GM12878 (cell line): ENCODE measurements at regions of chr7 and their contacts with region 1.

Region 1: DNA sequence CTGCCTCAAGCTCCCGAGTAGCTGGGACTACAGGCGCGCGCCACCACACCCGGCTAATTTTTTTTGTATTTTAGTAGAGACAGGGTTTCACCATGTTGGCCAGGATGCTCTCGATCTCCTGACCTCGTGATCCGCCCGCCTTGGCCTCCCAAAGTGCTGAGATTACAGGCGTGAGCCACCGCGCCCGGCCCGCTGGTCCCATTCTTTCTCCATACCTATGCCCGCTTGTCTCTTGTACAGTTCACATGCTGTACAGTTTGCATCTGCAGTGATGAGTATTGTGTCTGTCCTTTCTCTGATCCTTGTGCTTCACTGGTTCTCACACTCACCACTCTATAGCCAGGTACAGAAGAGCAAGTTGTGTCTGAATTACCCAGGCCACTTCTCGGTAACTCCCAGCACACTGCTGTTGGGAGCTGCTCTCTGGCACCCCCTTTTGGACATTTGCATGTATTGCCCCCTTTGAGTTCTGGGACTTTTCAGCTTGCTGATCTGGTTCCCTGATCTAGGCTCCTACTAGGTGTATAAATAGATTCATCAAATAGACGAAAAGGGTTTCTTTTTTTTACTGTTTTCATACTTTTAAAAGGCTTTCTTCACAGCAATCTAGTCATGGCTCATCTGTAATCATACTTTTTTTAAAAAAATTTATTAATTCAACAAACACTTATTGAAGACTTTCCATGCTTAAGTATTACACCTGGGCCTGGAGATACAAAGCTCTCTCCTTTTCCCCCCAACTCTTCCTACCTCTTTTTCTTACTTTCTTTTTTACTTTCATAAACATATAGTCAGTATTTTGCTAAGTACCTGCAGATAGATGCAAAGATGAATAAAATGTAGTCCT is 53.5 kb downstream of the AOAH start:
- DNase-seq: peak; percentile 28
- ATAC-seq: peak; percentile 95
- H3K4me3 ChIP-seq: no peak overlapping the region
- H3K27ac ChIP-seq: no peak overlapping the region
- H3K4me1 ChIP-seq: no peaks in the 10 kb centered on the region
- H3K27me3 ChIP-seq: peaks cover 0 to 6% of the 10 kb centered on the region in 2 experiments; a peak in 1 of 4 replicates
- CTCF ChIP-seq: peak; percentile 83 to 88 (median 86)
- EP300 ChIP-seq: no peak
- POLR2A ChIP-seq: no peak
- RAD21 ChIP-seq: peak; percentile 81

Region 2: GRCh38 chr7:36440880-36441279 is 229.9 kb before region 1 on chr7:
- CTCF ChIA-PET with region 1: interaction called, 11 read pairs
- POLR2A ChIA-PET with region 1: no interaction called
- RAD21 ChIA-PET with region 1: interaction called, 10 read pairs
- SMC1A ChIA-PET with region 1: interaction called, 6 read pairs
- in situ Hi-C with region 1: no loop called
- intact Hi-C with region 1: no loop called
- DNase-seq: no peak
- ATAC-seq: no peak
- H3K4me3 ChIP-seq: no peak overlapping the region
- H3K27ac ChIP-seq: no peak overlapping the region
- H3K4me1 ChIP-seq: no peaks in the 10 kb centered on the region
- H3K27me3 ChIP-seq: no peaks in the 10 kb centered on the region
- CTCF ChIP-seq: peak; percentile 15 to 32 (median 23); a peak in 3 of 6 replicates
- EP300 ChIP-seq: no peak
- POLR2A ChIP-seq: no peak
- RAD21 ChIP-seq: peak; percentile 30; the same call in 1 of the 2 replicates

Region 3: GRCh38 chr7:36487756-36488336 is 183.0 kb before region 1 on chr7:
- CTCF ChIA-PET with region 1: interaction called, 36 read pairs
- POLR2A ChIA-PET with region 1: interaction called, 3 read pairs
- RAD21 ChIA-PET with region 1: interaction called, 9 read pairs
- SMC1A ChIA-PET with region 1: interaction called, 21 read pairs
- in situ Hi-C with region 1: no loop called
- intact Hi-C with region 1: loop called (anchors 2 kb)
- DNase-seq: peak; percentile 21
- ATAC-seq: peak; percentile 57; the same call in 2 of the 3 replicates
- H3K4me3 ChIP-seq: no peak overlapping the region
- H3K27ac ChIP-seq: no peak overlapping the region
- H3K4me1 ChIP-seq: no peaks in the 10 kb centered on the region
- H3K27me3 ChIP-seq: no peaks in the 10 kb centered on the region; a peak in 1 of 4 replicates
- CTCF ChIP-seq: peak; percentile 57 to 77 (median 65); a peak in 5 of 6 replicates
- EP300 ChIP-seq: no peak
- POLR2A ChIP-seq: no peak
- RAD21 ChIP-seq: peak; percentile 84

Region 4: DNA sequence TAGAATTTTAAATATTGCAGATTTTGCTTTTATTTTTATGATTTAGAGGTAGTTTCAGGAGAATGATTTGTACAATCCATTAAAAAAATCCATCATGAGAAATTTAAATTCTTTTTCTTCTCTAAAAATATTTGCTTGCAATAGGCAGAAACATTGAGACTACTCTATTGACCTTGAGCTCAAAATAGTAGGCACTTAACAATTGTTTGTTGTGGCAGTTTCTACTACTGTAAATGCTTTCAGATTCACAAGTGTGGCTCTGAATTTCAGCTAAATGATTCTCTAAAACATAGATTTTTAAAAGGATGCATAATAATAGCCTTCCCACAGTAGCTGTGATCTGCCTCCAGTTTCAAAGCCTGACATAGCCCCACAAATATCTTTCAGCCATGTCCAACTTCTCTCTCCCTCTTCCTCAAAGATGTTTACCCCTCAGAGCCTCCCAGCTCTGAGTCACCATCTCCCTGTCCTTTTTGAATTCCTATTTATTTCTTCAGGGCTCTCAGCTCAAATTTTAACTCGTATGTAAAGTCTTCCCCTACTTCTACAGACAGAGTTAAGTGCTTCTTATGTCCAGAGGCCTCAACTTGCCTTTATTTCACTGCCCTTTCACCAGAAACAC is 107.0 kb before region 1 on chr7:
- CTCF ChIA-PET with region 1: no interaction called
- POLR2A ChIA-PET with region 1: no interaction called
- RAD21 ChIA-PET with region 1: no interaction called
- SMC1A ChIA-PET with region 1: no interaction called
- in situ Hi-C with region 1: no loop called
- intact Hi-C with region 1: no loop called
- DNase-seq: no peak
- ATAC-seq: no peak
- H3K4me3 ChIP-seq: no peak overlapping the region
- H3K27ac ChIP-seq: no peak overlapping the region
- H3K4me1 ChIP-seq: no peaks in the 10 kb centered on the region
- H3K27me3 ChIP-seq: no peaks in the 10 kb centered on the region; a peak in 1 of 4 replicates
- CTCF ChIP-seq: no peak
- EP300 ChIP-seq: no peak
- POLR2A ChIP-seq: no peak
- RAD21 ChIP-seq: no peak

Region 5: GRCh38 chr7:36630112-36630650 is 40.6 kb before region 1 on chr7:
- CTCF ChIA-PET with region 1: no interaction called
- POLR2A ChIA-PET with region 1: no interaction called
- RAD21 ChIA-PET with region 1: no interaction called
- SMC1A ChIA-PET with region 1: no interaction called
- in situ Hi-C with region 1: no loop called
- intact Hi-C with region 1: no loop called
- DNase-seq: no peak
- ATAC-seq: no peak
- H3K4me3 ChIP-seq: no peak overlapping the region
- H3K27ac ChIP-seq: no peak overlapping the region
- H3K4me1 ChIP-seq: no peaks in the 10 kb centered on the region
- H3K27me3 ChIP-seq: peaks cover 0 to 3% of the 10 kb centered on the region in 2 experiments; a peak in 1 of 4 replicates
- CTCF ChIP-seq: no peak
- EP300 ChIP-seq: no peak
- POLR2A ChIP-seq: no peak
- RAD21 ChIP-seq: no peak

Region 6: DNA sequence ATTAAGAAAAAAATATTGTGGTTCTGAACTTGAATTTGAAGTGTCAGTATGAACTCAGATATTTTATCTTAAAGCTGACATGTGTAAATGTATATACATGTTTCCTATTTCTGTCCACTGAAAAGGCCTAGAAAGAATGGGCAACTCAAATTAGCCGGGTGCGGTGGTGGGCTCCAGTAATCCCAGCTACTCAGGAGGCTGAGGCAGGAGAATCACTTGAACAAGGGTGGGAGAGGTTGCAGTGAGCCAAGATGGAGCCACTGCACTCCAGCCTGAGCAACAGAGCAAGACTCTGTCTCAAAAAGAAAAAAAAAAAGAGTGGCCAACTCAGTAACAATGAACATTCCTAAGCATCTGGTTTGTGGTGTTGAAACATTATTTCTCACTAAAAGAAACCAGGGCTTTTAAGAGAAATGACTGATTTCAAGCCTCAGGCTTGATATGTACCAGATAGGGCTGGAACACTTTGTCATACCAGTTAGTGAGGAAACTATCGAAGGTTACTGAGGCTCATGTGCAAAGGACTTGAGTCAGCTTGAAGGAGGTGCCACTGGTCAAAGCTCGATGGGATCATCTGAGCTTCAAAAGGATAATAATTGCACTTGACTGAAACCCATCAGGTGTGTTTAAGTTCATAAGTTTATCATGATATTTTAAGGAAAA is 13.0 kb after region 1 on chr7:
- CTCF ChIA-PET with region 1: interaction called, 25 read pairs
- POLR2A ChIA-PET with region 1: no interaction called
- RAD21 ChIA-PET with region 1: no interaction called
- SMC1A ChIA-PET with region 1: interaction called, 8 read pairs
- in situ Hi-C with region 1: no loop called
- intact Hi-C with region 1: no loop called
- DNase-seq: no peak
- ATAC-seq: no peak
- H3K4me3 ChIP-seq: no peak overlapping the region
- H3K27ac ChIP-seq: no peak overlapping the region
- H3K4me1 ChIP-seq: no peaks in the 10 kb centered on the region
- H3K27me3 ChIP-seq: no peaks in the 10 kb centered on the region; a peak in 2 of 4 replicates
- CTCF ChIP-seq: no peak
- EP300 ChIP-seq: no peak
- POLR2A ChIP-seq: no peak
- RAD21 ChIP-seq: no peak

Region 7: DNA sequence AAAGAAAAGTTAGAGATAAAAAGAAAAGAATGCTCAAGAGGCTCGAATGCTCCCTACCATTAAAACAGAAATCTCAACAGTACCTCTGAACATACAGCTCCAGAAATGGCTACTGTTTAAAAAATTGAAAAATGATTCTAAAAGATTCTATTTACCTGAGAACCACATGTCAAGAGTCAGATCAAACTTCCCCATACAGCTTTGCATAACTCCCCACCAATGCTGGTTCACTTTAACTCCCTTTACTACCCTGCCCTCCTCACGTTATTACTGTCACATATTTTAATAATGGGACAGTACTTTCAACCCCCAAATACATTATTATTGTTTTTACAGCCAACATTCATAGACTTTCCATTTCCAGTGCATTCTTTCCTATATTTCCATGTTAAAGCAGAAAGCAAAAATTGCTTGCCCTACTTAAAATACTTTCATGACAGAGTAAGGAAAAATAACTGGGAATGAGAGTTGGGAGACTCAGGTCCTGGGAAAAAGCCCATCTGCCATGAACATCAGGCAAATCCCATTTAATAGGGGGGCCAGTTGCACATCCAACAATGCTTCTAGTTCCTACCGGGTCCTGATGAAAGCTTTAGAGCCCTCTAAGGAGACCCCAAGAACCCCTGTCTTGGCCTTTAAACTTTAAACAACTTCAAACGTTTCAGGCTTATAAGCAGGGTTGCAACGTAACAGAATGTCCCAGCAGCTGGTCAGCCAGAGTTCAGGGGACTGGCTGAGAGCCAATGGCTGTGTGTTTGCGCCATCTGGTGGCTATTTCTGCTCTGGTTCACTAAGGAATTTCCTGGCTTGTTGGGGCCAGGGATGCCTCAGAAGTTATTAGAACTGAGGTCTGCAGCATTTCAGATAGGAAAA is 530.4 kb after region 1 on chr7:
- CTCF ChIA-PET with region 1: interaction called, 31 read pairs
- POLR2A ChIA-PET with region 1: no interaction called
- RAD21 ChIA-PET with region 1: interaction called, 4 read pairs
- SMC1A ChIA-PET with region 1: no interaction called
- in situ Hi-C with region 1: loop called (anchors 10 kb)
- intact Hi-C with region 1: no loop called
- DNase-seq: no peak
- ATAC-seq: peak; percentile 90
- H3K4me3 ChIP-seq: no peak overlapping the region
- H3K27ac ChIP-seq: no peak overlapping the region
- H3K4me1 ChIP-seq: 0 out of 2 replicates have a peak, but pooled peaks cover 3% of the 10 kb centered on the region
- H3K27me3 ChIP-seq: no peaks in the 10 kb centered on the region
- CTCF ChIP-seq: peak; percentile 76 to 85 (median 80)
- EP300 ChIP-seq: no peak
- POLR2A ChIP-seq: no peak
- RAD21 ChIP-seq: peak; percentile 69

Region 8: DNA sequence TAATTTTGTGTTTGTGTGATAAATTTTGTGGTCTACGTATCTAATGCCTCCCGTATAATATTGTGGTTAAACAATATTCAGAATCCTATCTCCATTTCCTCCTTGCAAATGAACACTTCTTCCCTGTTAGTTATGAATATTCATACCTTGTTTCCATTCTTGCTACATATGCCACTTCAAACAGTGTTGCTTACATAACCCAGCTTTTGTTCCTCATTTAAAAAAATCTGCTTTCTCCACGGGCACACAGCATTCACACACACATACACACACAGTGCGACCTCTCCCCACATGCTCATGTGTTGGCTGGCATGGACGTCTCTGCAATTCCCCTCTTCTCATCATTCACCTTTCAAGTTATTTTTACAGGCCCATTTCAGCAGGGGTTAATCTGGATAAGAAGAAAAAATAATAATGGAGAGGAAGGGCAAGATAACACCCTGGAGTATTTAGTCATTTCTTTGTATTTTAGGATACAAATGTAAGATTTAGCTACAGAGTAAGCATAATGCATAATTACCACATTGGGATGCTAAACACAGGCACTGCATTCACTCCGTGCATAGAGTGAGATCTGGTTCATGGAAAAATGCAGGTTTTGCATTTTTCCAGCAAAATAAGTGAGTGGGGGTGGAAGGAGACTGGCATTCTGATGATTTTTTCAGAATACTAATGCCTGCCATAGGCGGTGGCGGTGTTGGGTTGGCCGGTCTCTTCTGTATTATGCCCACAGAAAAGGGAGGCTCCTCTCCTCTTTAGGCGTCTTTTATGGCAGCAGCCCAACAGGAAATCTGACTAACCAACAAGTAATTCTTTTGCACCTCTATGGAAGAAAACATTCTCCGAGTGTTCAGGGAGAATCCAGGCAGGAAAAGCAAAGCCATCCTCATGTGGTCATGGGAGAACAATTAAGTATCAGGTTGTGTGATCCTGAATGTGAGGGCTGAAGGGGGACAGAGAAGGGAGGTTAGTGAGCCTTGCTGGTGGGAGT is 809.5 kb after region 1 on chr7:
- CTCF ChIA-PET with region 1: no interaction called
- POLR2A ChIA-PET with region 1: no interaction called
- RAD21 ChIA-PET with region 1: no interaction called
- SMC1A ChIA-PET with region 1: no interaction called
- in situ Hi-C with region 1: no loop called
- intact Hi-C with region 1: no loop called
- DNase-seq: no peak
- ATAC-seq: no peak
- H3K4me3 ChIP-seq: no peak overlapping the region
- H3K27ac ChIP-seq: no peak overlapping the region
- H3K4me1 ChIP-seq: no peaks in the 10 kb centered on the region
- H3K27me3 ChIP-seq: peaks cover 0 to 3% of the 10 kb centered on the region in 2 experiments; a peak in 1 of 4 replicates
- CTCF ChIP-seq: no peak
- EP300 ChIP-seq: no peak
- POLR2A ChIP-seq: no peak
- RAD21 ChIP-seq: no peak